AG04449 (cell line): ENCODE measurements at regions of chr4 and their contacts with region 1.

Region 1: GRCh38 chr4:145234091-145234706 is 53.8 kb upstream of the OTUD4 start:
- DNase-seq: no peak
- H3K4me3 ChIP-seq: no peak overlapping the region
- CTCF ChIP-seq: peak; percentile 77

Region 2: GRCh38 chr4:145216535-145216934 is 17.7 kb before region 1 on chr4:
- CTCF ChIA-PET with region 1: interaction called, 24 read pairs
- POLR2A ChIA-PET with region 1: no interaction called
- DNase-seq: no peak
- H3K4me3 ChIP-seq: no peak overlapping the region
- CTCF ChIP-seq: peak; percentile 33

Region 3: GRCh38 chr4:145482209-145483037 is 248.2 kb after region 1 on chr4:
- CTCF ChIA-PET with region 1: interaction called, 19 read pairs
- POLR2A ChIA-PET with region 1: no interaction called
- DNase-seq: no peak
- H3K4me3 ChIP-seq: peak overlapping the region; percentile 68
- CTCF ChIP-seq: no peak

Region 4: GRCh38 chr4:145557720-145558119 is 323.5 kb after region 1 on chr4:
- CTCF ChIA-PET with region 1: interaction called, 35 read pairs
- POLR2A ChIA-PET with region 1: no interaction called
- DNase-seq: no peak
- H3K4me3 ChIP-seq: no peak overlapping the region
- CTCF ChIP-seq: peak; percentile 90

Region 5: DNA sequence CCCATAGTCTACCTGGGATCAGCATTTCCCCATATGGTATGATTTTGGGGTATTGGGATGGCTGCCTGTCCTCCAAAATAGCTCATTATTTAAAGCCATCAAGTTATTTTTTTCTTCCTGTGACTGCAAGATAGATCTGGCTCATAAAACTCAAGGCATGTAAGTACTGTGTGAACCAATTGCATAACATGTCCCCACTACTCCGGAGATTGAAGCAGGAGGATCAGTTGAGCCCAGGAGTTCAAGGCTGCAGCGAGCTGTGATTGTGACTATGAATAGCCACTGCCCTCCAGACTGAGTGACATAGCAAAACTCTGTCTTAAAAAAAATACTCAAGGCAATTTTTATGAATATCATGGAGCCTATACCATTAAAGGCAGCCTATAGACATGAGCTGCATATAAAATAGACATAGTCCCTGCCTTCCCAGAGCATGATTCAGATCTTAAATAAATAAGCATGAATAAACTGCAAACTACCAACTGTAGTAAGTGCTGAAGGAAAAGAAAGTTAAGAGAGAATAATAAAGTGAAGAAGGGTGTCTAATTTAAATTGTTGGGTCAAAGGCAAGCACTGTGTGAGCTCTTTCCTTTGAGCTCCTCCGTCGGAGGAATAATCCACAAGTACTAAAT is 368.0 kb after region 1 on chr4:
- CTCF ChIA-PET with region 1: interaction called, 12 read pairs
- POLR2A ChIA-PET with region 1: no interaction called
- DNase-seq: no peak
- H3K4me3 ChIP-seq: no peak overlapping the region
- CTCF ChIP-seq: no peak

Region 6: DNA sequence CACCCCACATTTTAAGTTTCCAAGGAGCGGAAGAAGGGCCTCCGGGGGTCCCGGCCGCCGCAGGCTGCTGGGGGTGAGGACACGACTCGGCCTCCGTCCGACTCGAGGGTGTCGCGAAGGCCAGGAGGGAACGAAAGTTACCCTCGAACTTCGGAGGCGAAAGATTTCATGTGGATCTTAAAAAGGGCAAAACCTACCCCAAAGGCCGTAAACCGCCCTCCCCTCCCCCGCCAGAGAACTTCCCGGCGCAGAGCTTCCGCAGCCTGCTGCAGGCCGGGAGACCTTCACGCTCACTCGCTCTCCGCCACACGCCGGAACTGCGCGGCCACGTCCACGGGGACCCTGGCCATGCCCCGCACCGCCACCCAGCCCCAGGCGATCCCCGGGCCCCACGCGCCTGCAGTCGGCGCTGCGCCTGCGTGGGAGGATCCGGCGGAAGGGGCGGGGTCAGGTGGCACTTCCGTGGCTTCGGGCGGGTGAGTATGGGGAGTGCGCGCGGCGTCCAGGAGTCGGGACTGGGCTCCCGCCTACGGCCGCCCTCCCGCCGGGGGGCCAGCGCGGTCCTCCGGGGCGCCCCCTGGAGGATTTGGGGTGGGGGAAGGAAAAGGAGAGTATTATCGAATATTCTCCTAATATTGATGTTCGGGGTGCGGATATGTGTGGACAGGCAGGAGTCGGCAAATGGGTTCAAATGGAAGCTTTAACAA is 384.9 kb after region 1 on chr4 and contains the start of gene MMAA:
- CTCF ChIA-PET with region 1: interaction called, 42 read pairs
- POLR2A ChIA-PET with region 1: no interaction called
- DNase-seq: peak; percentile 41
- H3K4me3 ChIP-seq: peak within 1 kb of the TSS; percentile 83
- CTCF ChIP-seq: peak; percentile 54